Gastrocnemius medialis (tissue), 4 donors: ENCODE measurements at regions of chr1 and their contacts with region 1.

Region 1: GRCh38 chr1:27392096-27392777 is at the start of gene GPR3:
- DNase-seq: peak; percentile 77 to 84
- ATAC-seq: peak; percentile 70
- H3K4me3 ChIP-seq: peak within 1 kb of the TSS; percentile 50 to 65 (median 54)
- H3K27ac ChIP-seq: peak within 1 kb of the TSS; percentile 44 to 67 (median 62)
- H3K4me1 ChIP-seq: peaks cover 17 to 19% of the 10 kb centered on the region in 2 donors
- H3K27me3 ChIP-seq: no peaks in the 10 kb centered on the region
- CTCF ChIP-seq: peak; percentile 32 to 65 (median 62)
- POLR2A ChIP-seq: peak; percentile 27 to 53
- total RNA-seq, gene GPR3: 0.23 to 0.51 (median 0.35) TPM in 3 of 4 donors, not detected in the other

Region 2: GRCh38 chr1:27102707-27103491 is 289.3 kb before region 1 on chr1:
- in situ Hi-C with region 1: no loop called
- intact Hi-C with region 1: loop called (anchors 5 kb)
- DNase-seq: peak in 1 of 2 donors; percentile 65
- ATAC-seq: peak; percentile 49 to 77
- H3K4me3 ChIP-seq: no peak overlapping the region
- H3K27ac ChIP-seq: no peak overlapping the region
- H3K4me1 ChIP-seq: peaks cover 0 to 6% of the 10 kb centered on the region in 2 donors
- H3K27me3 ChIP-seq: no peaks in the 10 kb centered on the region
- CTCF ChIP-seq: peak; percentile 93 to 99 (median 98)
- POLR2A ChIP-seq: no peak

Region 3: GRCh38 chr1:27300341-27301051 is 91.7 kb before region 1 on chr1:
- in situ Hi-C with region 1: loop called in 3 of 4 experiments (anchors 5 kb)
- intact Hi-C with region 1: loop called (anchors 1 kb)
- DNase-seq: peak; percentile 67 to 79
- ATAC-seq: peak; percentile 84 to 92
- H3K4me3 ChIP-seq: no peak overlapping the region
- H3K27ac ChIP-seq: peak overlapping the region in 3 of 4 donors; percentile 41 to 65 (median 65)
- H3K4me1 ChIP-seq: peaks cover 27 to 37% of the 10 kb centered on the region in 2 donors
- H3K27me3 ChIP-seq: no peaks in the 10 kb centered on the region
- CTCF ChIP-seq: peak; percentile 96 to 99 (median 98)
- POLR2A ChIP-seq: no peak

Region 4: DNA sequence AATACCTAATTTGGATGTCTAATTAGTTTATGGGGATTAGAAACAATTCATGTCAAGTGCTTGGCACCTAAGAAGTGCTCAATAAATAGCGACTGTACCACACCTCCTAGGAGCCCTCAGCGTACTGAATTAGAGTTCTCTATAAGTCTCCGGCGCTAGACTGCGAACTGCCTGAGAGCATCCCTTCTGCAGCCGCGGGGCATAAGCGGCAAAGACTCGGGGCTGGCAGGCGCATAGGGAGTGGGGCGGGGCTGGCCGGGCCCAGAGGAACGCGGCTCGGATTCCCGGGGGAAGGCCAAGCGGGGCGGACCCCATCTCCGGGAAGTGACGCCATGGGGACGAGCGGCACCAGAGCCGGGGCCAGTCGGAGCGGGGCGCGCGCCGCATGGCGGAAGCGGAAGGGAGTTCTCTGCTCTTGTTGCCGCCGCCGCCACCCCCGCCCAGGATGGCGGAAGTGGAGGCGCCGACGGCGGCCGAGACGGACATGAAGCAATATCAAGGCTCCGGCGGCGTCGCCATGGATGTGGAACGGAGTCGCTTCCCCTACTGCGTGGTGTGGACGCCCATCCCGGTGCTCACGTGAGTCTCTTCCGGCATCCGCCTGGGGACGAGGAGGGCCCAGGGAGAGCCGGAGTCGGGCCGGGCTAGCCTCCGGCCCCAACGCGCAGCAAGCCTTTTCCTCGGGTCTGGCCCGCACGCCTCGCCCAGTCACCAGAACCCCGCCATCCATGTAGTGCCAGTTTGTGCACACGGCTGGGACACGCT is 70.2 kb before region 1 on chr1 and contains the start of gene TMEM222:
- in situ Hi-C with region 1: loop called in 1 of 4 experiments (anchors 10 kb)
- intact Hi-C with region 1: no loop called
- DNase-seq: peak; percentile 95 to 96
- ATAC-seq: peak; percentile 97
- H3K4me3 ChIP-seq: peak within 1 kb of the TSS; percentile 85 to 100 (median 87)
- H3K27ac ChIP-seq: peak within 1 kb of the TSS; percentile 90 to 95 (median 92)
- H3K4me1 ChIP-seq: peaks cover 21 to 35% of the 10 kb centered on the region in 2 donors
- H3K27me3 ChIP-seq: peaks cover 17 to 19% (median 18%) of the 10 kb centered on the region in 3 donors
- CTCF ChIP-seq: peak in 4 of 5 experiments; percentile 36 to 42 (median 38)
- POLR2A ChIP-seq: peak; percentile 54 to 62
- total RNA-seq, gene TMEM222: 16.5 to 21.9 (median 17.8) TPM

Region 5: GRCh38 chr1:27357281-27358037 is 34.8 kb before region 1 on chr1:
- in situ Hi-C with region 1: loop called in 2 of 4 experiments (anchors 5 kb)
- intact Hi-C with region 1: loop called (anchors 1 kb)
- DNase-seq: peak; percentile 54 to 73
- ATAC-seq: peak; percentile 73 to 94
- H3K4me3 ChIP-seq: no peak overlapping the region
- H3K27ac ChIP-seq: no peak overlapping the region
- H3K4me1 ChIP-seq: no peaks in the 10 kb centered on the region
- H3K27me3 ChIP-seq: no peaks in the 10 kb centered on the region
- CTCF ChIP-seq: peak; percentile 94 to 98 (median 98)
- POLR2A ChIP-seq: no peak

Region 6: DNA sequence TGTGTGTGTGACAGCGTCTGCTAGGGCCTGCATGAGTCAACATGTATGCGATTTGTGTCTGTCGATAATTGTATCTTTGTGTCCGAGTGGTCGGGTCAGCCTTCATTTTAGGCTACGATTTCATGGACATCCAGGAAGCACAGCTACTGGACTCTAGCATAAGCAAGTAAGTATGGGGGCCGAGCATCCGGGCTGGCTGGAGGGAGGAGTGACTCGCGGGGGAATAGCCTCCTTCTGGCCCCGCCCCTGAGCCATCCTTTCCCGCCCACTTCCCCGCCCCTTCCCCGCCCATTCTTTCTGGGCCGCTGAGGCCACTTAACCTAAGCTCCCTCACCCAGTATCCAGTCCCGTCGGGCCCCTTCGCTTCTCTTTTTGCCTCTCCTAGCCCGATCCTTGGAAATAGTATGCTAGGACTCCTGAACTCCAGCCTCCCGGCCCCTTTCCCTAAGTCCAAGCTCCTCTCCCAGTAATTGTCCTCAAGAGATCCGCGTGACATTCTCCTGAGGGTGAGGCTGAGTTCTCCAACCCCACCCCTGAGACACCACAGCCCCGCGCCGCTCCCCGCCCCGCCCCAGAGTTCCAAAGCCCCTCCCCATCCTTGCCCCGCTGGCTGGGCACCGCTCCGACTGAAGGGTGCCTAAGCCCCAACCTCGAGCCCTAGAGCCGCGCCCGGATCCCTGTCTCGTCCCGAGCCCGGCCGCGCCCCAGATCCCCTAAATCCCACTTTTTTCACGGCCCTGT is 26.7 kb before region 1 on chr1:
- in situ Hi-C with region 1: no loop called
- intact Hi-C with region 1: loop called (anchors 1 kb)
- DNase-seq: peak; percentile 82 to 88
- ATAC-seq: peak; percentile 79 to 80
- H3K4me3 ChIP-seq: peak overlapping the region; percentile 71 to 95 (median 77)
- H3K27ac ChIP-seq: peak overlapping the region; percentile 91 to 99 (median 96)
- H3K4me1 ChIP-seq: peaks cover 22 to 23% of the 10 kb centered on the region in 2 donors
- H3K27me3 ChIP-seq: no peaks in the 10 kb centered on the region
- CTCF ChIP-seq: no peak
- POLR2A ChIP-seq: peak; percentile 57 to 64

Region 7: GRCh38 chr1:27662707-27663393 is 270.6 kb after region 1 on chr1:
- in situ Hi-C with region 1: loop called in 2 of 4 experiments (anchors 10 kb)
- intact Hi-C with region 1: loop called (anchors 2 kb)
- DNase-seq: peak; percentile 53 to 75
- ATAC-seq: peak; percentile 51 to 60
- H3K4me3 ChIP-seq: no peak overlapping the region
- H3K27ac ChIP-seq: peak overlapping the region in 3 of 4 donors; percentile 48 to 74 (median 66)
- H3K4me1 ChIP-seq: peaks cover 0 to 20% of the 10 kb centered on the region in 2 donors
- H3K27me3 ChIP-seq: no peaks in the 10 kb centered on the region
- CTCF ChIP-seq: peak; percentile 91 to 98 (median 94)
- POLR2A ChIP-seq: no peak